AG04450 (cell line): ENCODE measurements at regions of chr3 and their contacts with region 1.

Region 1: DNA sequence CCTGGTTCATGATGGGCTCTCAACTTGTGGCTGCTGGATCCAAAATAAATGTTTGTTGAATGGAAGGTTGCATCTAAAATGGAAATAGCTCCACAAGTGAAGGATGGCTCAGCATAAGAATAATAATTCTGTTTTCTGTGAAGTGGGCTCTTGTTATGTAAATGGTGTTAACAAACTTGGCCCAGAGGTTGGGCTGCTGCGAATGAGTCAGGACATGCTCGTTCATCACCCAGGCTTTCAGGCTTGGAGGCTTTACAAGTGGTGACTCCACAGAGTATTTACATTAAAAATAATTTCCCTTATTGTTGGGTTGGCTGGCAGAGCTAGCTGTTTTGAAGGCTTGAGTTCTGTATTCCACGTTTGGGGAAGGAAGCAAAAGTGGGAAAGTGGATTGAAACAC is 60.5 kb downstream of the ITGB5 start:
- DNase-seq: peak; percentile 84
- H3K4me3 ChIP-seq: no peak overlapping the region
- H3K27ac ChIP-seq: peak overlapping the region; percentile 49
- H3K27me3 ChIP-seq: no peaks in the 10 kb centered on the region
- CTCF ChIP-seq: no peak

Region 2: GRCh38 chr3:124775877-124776276 is 50.8 kb before region 1 on chr3:
- CTCF ChIA-PET with region 1: no interaction called
- POLR2A ChIA-PET with region 1: no interaction called
- DNase-seq: no peak
- H3K4me3 ChIP-seq: no peak overlapping the region
- H3K27ac ChIP-seq: no peak overlapping the region
- H3K27me3 ChIP-seq: no peaks in the 10 kb centered on the region
- CTCF ChIP-seq: no peak

Region 3: GRCh38 chr3:124786441-124787241 is 40.1 kb before region 1 on chr3:
- CTCF ChIA-PET with region 1: interaction called, 10 read pairs
- POLR2A ChIA-PET with region 1: interaction called, 3 read pairs
- DNase-seq: no peak
- H3K4me3 ChIP-seq: no peak overlapping the region
- H3K27ac ChIP-seq: no peak overlapping the region
- H3K27me3 ChIP-seq: no peaks in the 10 kb centered on the region
- CTCF ChIP-seq: peak; percentile 52